ENCODE measurements at regions of chr7 and their contacts with region 1.

Region 1: GRCh38 chr7:149239345-149240191 is at the start of gene ZNF212:
- DNase-seq: peak; percentile 82 to 98 (median 92)

Region 2: GRCh38 chr7:149147072-149147751 is 92.4 kb before region 1 on chr7 and contains the start of gene ZNF398:
- intact Hi-C with region 1: loop called (anchors 5 kb)
- DNase-seq: peak; percentile 56 to 96 (median 70)

Region 3: GRCh38 chr7:149180722-149181449 is 58.7 kb before region 1 on chr7:
- intact Hi-C with region 1: no loop called
- DNase-seq: no peak

Region 4: GRCh38 chr7:149195180-149196150 is 44.1 kb before region 1 on chr7 and contains the start of gene ZNF282:
- intact Hi-C with region 1: loop called (anchors 1 kb)
- DNase-seq: peak; percentile 80 to 99 (median 92)

Region 5: GRCh38 chr7:149317986-149318672 is 78.6 kb after region 1 on chr7:
- intact Hi-C with region 1: no loop called
- DNase-seq: no peak

Region 6: DNA sequence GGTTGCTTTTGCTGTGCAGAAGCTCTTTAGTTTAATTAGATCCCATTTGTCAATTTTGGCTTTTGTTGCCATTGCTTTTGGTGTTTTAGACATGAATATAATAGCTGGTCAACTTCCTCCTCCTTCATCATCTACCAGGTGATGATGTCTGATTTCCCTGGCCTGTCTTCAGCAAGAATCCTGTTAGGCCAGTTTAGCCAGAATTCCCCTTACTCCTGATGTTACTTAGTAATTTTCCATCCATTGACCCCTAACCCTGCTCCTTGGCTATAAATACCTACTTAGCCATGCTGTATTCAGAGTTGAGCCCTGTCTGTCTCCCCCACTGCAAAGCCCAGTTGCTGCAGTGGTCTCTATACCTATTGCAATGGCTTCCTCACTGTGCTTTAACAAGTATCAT is 129.9 kb after region 1 on chr7:
- intact Hi-C with region 1: no loop called
- DNase-seq: no peak

Measured in posterior cingulate gyrus (tissue), 11 donors.